ENCODE measurements at regions of chr9 and their contacts with region 1.

Region 1: GRCh38 chr9:35646533-35647265 is 4.0 kb downstream of the SIT1 start:
- DNase-seq: peak; percentile 98
- H3K4me3 Mint-ChIP-seq: peak overlapping the region; percentile 92
- H3K27ac Mint-ChIP-seq: peak overlapping the region; percentile 96
- H3K4me1 Mint-ChIP-seq: peaks cover 41% of the 10 kb centered on the region
- H3K27me3 Mint-ChIP-seq: no peaks in the 10 kb centered on the region

Region 2: GRCh38 chr9:35618854-35619799 is 27.6 kb before region 1 on chr9:
- intact Hi-C with region 1: loop called (anchors 1 kb)
- DNase-seq: peak; percentile 82
- H3K4me3 Mint-ChIP-seq: peak overlapping the region; percentile 81
- H3K27ac Mint-ChIP-seq: peak overlapping the region; percentile 95
- H3K4me1 Mint-ChIP-seq: peaks cover 59% of the 10 kb centered on the region
- H3K27me3 Mint-ChIP-seq: peaks cover 1% of the 10 kb centered on the region

Region 3: GRCh38 chr9:35657546-35658136 is 10.9 kb after region 1 on chr9 and contains the start of gene RMRP:
- intact Hi-C with region 1: loop called (anchors 1 kb)
- DNase-seq: peak; percentile 96
- H3K4me3 Mint-ChIP-seq: peak within 1 kb of the TSS; percentile 92
- H3K27ac Mint-ChIP-seq: peak within 1 kb of the TSS; percentile 99
- H3K4me1 Mint-ChIP-seq: peaks cover 58% of the 10 kb centered on the region
- H3K27me3 Mint-ChIP-seq: peaks cover 7% of the 10 kb centered on the region
- total RNA-seq, gene RMRP: 5,949 and 6,301 TPM in 2 replicates

Region 4: GRCh38 chr9:35690431-35691333 is 44.0 kb after region 1 on chr9:
- intact Hi-C with region 1: loop called (anchors 2 kb)
- DNase-seq: peak; percentile 79
- H3K4me3 Mint-ChIP-seq: peak overlapping the region; percentile 86
- H3K27ac Mint-ChIP-seq: peak overlapping the region; percentile 81
- H3K4me1 Mint-ChIP-seq: peaks cover 21% of the 10 kb centered on the region
- H3K27me3 Mint-ChIP-seq: no peaks in the 10 kb centered on the region

Measured in activated CD4-positive, alpha-beta T cell treated with anti-CD3 and anti-CD28 coated beads, Interleukin-2, amount 10 ng/mL, durations not matched to agents 24 days and 14 days (primary cell).